KBM-7 (cell line): ENCODE measurements at regions of chr4 and their contacts with region 1.

Region 1: GRCh38 chr4:41214136-41214824 is at the start of gene APBB2:
- DNase-seq: peak; percentile 95

Region 2: DNA sequence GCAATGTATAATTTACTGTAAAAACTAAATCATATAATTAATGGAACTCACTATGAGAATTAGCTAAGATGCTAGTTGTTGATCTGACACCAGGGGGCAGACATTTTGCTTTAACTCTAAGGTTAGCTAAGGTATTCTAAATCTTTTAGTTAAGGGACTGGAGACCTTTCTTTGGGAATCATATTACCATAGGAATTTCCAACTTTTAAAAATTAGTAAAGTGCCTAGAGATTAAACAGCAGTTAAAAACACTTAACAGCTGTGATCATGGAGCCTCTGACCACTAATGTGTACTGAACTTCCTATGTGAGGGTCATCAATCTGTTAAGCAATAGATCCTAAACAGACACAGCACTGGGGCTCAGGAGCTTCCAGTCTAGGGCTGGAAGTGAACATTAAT is 237.9 kb before region 1 on chr4:
- in situ Hi-C with region 1: loop called (anchors 25 kb)
- DNase-seq: peak; percentile 49

Region 3: DNA sequence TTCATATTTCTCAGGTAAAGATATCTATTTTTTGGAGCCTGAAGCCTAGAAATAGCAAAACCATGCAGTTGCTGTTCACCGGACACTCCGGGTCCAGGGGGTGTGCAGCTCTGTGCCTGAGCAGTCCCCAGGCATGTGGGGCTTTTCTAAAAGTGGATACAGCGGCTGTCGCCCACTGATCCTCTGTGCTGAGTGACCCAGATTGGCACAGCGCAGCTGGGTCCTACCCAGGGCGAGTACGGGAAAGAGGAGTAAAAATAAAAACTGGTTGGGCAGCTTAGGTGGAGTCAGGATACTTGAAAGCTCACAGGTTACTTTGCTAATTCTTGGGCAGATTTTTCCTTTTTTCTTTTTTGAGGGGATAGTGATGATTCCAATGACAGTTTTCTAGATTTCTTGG is 161.3 kb after region 1 on chr4:
- in situ Hi-C with region 1: no loop called
- DNase-seq: no peak